ENCODE measurements at regions of chr1 and their contacts with region 1.

Region 1: GRCh38 chr1:117059678-117060440 is at the start of gene TTF2:
- DNase-seq: peak; percentile 95
- H3K4me3 ChIP-seq: peak within 1 kb of the TSS; percentile 62 to 94 (median 80)
- H3K27ac ChIP-seq: peak within 1 kb of the TSS; percentile 67 to 93 (median 86)
- H3K4me1 ChIP-seq: peaks cover 6 to 59% (median 24%) of the 10 kb centered on the region in 6 donors
- H3K27me3 ChIP-seq: no peaks in the 10 kb centered on the region
- CTCF ChIP-seq: peak in 10 of 11 experiments; percentile 15 to 66 (median 52)
- POLR2A ChIP-seq: peak in 1 of 3 donors; percentile 28
- total RNA-seq, gene TTF2: 16.8 to 36.1 (median 25.4) TPM

Region 2: DNA sequence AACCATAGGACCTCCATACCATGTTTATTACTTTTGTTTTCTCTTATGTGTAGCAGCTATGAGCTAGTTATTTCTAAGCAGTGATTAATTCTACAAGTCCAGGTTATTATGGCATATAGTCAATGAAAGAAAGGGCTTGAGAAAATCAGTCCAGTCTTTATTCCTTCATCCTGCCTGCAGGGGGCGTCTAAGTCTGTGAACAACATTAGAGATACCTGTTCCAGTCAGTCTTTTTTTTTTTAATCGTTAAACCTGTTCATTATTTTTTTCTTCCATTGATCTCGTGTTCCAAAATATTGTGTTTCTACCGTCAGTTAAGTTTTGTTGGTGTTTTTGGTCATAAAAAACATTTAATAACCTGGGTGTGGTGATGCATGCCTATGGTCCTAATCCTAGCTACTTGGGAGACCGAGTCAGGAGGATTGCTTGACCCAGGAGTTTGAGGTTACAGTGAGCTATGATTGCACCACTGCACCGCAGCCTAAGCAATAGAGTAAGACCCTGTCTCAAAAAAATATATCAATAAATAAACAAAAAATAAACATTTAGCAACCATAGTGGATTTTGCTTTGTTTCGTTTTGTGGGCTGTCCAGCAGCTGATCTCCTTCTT is 335.0 kb before region 1 on chr1:
- intact Hi-C with region 1: loop called (anchors 5 kb)
- DNase-seq: no peak
- H3K4me3 ChIP-seq: no peak overlapping the region
- H3K27ac ChIP-seq: no peak overlapping the region
- H3K4me1 ChIP-seq: peaks cover 0 to 12% (median 3%) of the 10 kb centered on the region in 6 donors
- H3K27me3 ChIP-seq: no peaks in the 10 kb centered on the region
- CTCF ChIP-seq: peak; percentile 42 to 77 (median 66)
- POLR2A ChIP-seq: no peak

Region 3: DNA sequence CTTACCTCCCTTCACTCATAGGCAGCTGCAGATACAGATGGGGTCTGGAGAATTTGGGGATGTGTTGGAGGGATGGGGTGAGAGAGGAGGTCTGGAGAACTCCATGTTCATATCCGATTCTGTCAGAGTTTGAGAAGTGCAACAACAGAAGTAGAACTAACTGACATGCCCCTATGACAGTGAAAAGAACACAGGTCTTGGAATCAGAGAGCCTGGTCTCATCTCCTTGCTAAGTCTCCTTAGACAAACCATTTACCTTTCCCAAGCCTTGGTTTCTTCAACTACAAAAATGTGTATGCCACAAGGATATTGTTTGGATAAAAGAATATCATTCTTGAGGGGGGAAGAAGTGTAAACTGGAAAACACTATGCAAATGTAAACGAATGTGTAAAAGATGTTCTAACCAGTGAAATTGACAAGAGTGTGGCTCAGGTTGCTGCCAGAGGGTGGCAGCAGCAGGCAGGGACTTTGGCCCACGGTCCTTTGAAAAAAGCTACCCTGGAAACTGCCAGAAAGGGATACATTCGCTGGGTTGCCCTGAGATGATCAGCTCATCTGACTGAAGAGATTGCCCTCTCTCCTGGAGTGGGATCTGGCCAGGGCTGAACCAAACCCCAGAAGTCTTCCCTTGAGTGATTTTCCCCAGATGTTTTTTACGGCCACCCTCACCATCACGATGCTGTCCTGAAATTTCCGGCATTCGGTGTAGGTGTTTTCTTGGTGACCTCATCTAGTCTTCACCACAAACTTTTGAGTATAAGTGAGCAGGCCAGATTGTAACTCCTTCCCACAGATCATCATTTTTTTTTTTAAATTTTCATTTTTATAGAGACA is 322.6 kb before region 1 on chr1:
- intact Hi-C with region 1: loop called (anchors 5 kb)
- DNase-seq: peak; percentile 84
- H3K4me3 ChIP-seq: peak overlapping the region in 2 of 8 donors; percentile 3 to 31
- H3K27ac ChIP-seq: peak overlapping the region; percentile 11 to 84 (median 63)
- H3K4me1 ChIP-seq: peaks cover 11 to 38% (median 26%) of the 10 kb centered on the region in 6 donors
- H3K27me3 ChIP-seq: no peaks in the 10 kb centered on the region
- CTCF ChIP-seq: peak; percentile 61 to 84 (median 75)
- POLR2A ChIP-seq: no peak

Region 4: DNA sequence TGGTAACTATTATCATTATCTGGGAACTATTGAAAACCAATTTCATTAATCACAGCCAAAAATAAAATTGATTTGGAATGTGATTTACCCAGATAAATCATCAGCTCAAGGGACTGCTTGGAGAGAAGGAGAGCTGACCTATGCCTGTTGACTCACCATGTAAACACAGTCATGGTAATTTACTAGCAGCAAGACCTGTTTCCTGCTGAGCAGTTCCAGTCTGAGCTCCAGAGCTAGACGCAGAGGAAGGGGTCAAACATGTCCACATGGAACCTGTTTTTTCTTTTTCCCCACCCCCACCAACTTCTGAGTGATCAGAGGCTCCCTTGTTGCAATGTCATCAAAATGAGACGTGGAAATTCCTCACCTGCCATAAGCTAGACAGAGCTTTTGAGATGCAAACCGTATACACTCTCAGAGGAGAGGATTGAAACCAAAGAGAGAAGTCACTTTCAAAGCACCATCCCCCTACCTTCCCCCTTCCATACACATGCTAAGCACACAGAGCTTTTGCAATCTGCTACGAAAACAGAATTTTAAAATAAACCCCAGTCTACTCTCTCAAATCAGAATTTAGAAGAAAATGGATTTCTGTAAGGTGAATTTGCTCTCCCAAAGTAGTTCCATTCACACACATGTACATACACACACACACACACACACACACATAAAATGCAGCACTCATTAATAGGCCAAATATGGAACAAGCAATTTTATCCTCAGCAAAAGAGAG is 206.0 kb before region 1 on chr1:
- intact Hi-C with region 1: loop called (anchors 10 kb)
- DNase-seq: no peak
- H3K4me3 ChIP-seq: no peak overlapping the region
- H3K27ac ChIP-seq: no peak overlapping the region
- H3K4me1 ChIP-seq: peaks cover 0 to 19% (median 11%) of the 10 kb centered on the region in 6 donors
- H3K27me3 ChIP-seq: no peaks in the 10 kb centered on the region
- CTCF ChIP-seq: no peak
- POLR2A ChIP-seq: no peak

Region 5: GRCh38 chr1:117130574-117130973 is 70.7 kb after region 1 on chr1:
- intact Hi-C with region 1: loop called (anchors 2 kb)
- DNase-seq: no peak
- H3K4me3 ChIP-seq: no peak overlapping the region
- H3K27ac ChIP-seq: no peak overlapping the region
- H3K4me1 ChIP-seq: no peaks in the 10 kb centered on the region
- H3K27me3 ChIP-seq: peaks cover 0 to 9% (median 0%) of the 10 kb centered on the region in 7 donors
- CTCF ChIP-seq: no peak
- POLR2A ChIP-seq: no peak

Region 6: GRCh38 chr1:117188170-117188815 is 128.4 kb after region 1 on chr1:
- intact Hi-C with region 1: no loop called
- DNase-seq: no peak
- H3K4me3 ChIP-seq: no peak overlapping the region
- H3K27ac ChIP-seq: no peak overlapping the region
- H3K4me1 ChIP-seq: no peaks in the 10 kb centered on the region
- H3K27me3 ChIP-seq: no peaks in the 10 kb centered on the region
- CTCF ChIP-seq: no peak
- POLR2A ChIP-seq: no peak

Region 7: GRCh38 chr1:117758444-117759316 is 698.8 kb after region 1 on chr1:
- intact Hi-C with region 1: loop called (anchors 10 kb)
- DNase-seq: peak; percentile 81
- H3K4me3 ChIP-seq: peak overlapping the region in 7 of 8 donors; percentile 10 to 56 (median 22)
- H3K27ac ChIP-seq: peak overlapping the region in 2 of 8 donors; percentile 24 to 39
- H3K4me1 ChIP-seq: peaks cover 0 to 18% (median 12%) of the 10 kb centered on the region in 6 donors
- H3K27me3 ChIP-seq: peaks cover 0 to 15% (median 4%) of the 10 kb centered on the region in 7 donors
- CTCF ChIP-seq: peak; percentile 58 to 88 (median 78)
- POLR2A ChIP-seq: no peak

Measured in spleen (tissue), 13 donors.